Activated CD8-positive, alpha-beta T cell treated with anti-CD3 and anti-CD28 coated beads for 36 hours (primary cell): ENCODE measurements at regions of chr1 and their contacts with region 1.

Region 1: DNA sequence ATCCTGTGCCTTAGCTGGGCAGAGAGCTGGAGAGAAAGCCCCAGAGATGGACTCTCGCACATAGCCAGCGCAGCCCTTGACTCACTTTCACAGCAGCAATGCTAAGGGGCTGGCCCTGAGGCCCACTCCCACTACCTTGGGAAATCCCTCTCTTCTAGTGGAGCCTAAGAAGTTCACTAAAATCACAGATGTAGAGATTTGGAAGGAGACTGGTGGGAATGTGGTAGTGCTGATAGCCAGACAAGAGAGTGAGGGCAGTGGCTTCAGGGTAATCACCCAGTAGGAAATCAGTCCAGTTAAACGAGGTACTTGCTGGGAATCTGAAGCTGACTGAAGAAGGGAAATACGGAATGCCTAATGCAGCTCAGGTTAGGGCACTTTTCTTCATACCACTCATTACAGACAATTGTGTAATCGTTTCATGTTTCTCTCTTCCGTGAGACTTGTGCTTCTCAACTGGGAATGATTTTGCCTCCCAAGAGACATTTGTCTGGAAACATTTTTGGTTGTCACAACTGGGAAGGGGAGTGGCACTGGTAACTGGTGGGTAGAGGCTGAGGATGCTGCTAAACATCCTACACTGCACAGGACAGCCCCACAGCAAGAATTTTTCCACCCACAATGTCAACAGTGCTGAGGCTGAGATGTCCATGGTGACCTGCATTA is 42.4 kb upstream of the LRRC8C start:
- DNase-seq: peak; percentile 31
- ATAC-seq: peak; percentile 58
- H3K4me3 Mint-ChIP-seq: no peak overlapping the region
- H3K27ac Mint-ChIP-seq: peak overlapping the region; percentile 67
- H3K4me1 Mint-ChIP-seq: peaks cover 76% of the 10 kb centered on the region
- H3K27me3 Mint-ChIP-seq: no peaks in the 10 kb centered on the region
- CTCF ChIP-seq: no peak

Region 2: GRCh38 chr1:89499320-89499719 is 91.2 kb before region 1 on chr1:
- CTCF ChIA-PET with region 1: no interaction called
- POLR2A ChIA-PET with region 1: no interaction called
- intact Hi-C with region 1: no loop called
- DNase-seq: no peak
- ATAC-seq: no peak
- H3K4me3 Mint-ChIP-seq: no peak overlapping the region
- H3K27ac Mint-ChIP-seq: no peak overlapping the region
- H3K4me1 Mint-ChIP-seq: no peaks in the 10 kb centered on the region
- H3K27me3 Mint-ChIP-seq: peaks cover 2% of the 10 kb centered on the region
- CTCF ChIP-seq: no peak

Region 3: DNA sequence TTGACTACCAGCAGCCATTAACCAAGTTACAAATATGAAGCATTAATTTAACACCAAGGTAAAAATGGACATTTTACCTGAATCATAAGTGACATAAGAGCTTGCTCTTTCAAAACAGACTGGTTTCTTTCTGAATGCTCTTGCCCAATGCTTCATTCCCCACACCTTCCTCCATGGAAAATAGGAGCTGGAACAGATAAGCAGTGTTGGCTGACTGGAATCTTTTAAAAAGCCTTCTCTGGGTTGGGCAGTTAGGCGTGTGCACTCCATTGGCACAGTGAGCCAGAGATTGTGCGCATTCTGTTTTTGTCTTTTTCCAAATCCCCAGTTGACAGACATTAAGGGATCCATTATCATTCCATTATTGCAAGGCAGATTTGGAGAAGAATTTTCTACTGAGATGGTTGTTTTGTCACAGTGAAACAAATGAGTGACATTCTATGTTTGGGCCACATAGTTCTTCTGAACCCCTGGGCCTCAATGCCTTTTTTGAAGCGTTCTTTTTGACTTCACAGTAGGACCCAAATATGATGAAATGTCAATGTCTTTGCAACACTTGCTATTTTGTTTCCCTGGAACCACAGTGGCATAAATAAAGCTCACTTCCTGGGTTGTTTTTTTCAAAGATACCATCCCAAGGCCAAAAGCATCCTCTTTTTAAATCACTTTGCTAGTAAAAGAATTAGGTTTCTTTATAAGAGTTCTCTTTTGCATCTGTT is 33.7 kb before region 1 on chr1:
- CTCF ChIA-PET with region 1: no interaction called
- POLR2A ChIA-PET with region 1: no interaction called
- intact Hi-C with region 1: loop called (anchors 5 kb)
- DNase-seq: no peak
- ATAC-seq: no peak
- H3K4me3 Mint-ChIP-seq: no peak overlapping the region
- H3K27ac Mint-ChIP-seq: peak overlapping the region; percentile 64
- H3K4me1 Mint-ChIP-seq: peaks cover 55% of the 10 kb centered on the region
- H3K27me3 Mint-ChIP-seq: no peaks in the 10 kb centered on the region
- CTCF ChIP-seq: no peak

Region 4: DNA sequence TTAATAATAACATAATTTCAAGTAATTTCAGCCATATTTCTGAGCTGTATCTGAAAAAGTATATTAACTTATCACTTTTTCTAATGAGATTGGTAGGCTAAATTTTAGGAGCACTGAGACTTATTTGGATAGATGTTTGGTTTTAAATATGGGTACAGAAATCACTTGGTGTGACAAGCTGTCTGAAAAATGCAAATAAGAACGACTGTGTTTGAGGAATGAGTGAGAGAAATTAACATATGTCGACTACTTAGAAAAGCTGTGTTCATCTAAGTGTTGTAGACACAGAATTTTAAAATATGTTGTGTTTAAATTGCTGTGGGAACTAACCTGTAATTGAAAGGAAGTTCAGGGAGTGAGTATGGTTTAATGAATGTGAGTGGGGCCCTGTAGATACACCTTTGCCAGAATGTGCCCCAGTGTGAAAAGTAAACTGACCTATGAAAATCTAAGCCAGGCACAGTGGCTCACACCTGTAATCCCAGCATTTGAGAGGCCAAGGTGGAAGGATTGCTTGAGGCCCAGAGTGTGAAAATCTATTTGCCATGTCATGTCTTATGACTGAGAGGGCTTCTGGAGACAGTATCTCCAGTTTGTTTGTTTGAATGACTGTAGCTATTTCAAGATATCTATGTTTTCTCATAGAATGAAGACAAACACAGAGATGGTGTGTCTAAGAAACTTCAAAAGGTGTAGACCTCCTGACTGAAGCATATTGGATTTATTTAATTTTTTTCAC is 11.4 kb before region 1 on chr1:
- CTCF ChIA-PET with region 1: interaction called, 11 read pairs
- POLR2A ChIA-PET with region 1: no interaction called
- intact Hi-C with region 1: no loop called
- DNase-seq: no peak
- ATAC-seq: no peak
- H3K4me3 Mint-ChIP-seq: no peak overlapping the region
- H3K27ac Mint-ChIP-seq: no peak overlapping the region
- H3K4me1 Mint-ChIP-seq: peaks cover 36% of the 10 kb centered on the region
- H3K27me3 Mint-ChIP-seq: no peaks in the 10 kb centered on the region
- CTCF ChIP-seq: no peak

Region 5: GRCh38 chr1:89622895-89623294 is 32.3 kb after region 1 on chr1:
- CTCF ChIA-PET with region 1: no interaction called
- POLR2A ChIA-PET with region 1: no interaction called
- intact Hi-C with region 1: no loop called
- DNase-seq: no peak
- ATAC-seq: peak; percentile 11
- H3K4me3 Mint-ChIP-seq: no peak overlapping the region
- H3K27ac Mint-ChIP-seq: peak overlapping the region; percentile 59
- H3K4me1 Mint-ChIP-seq: peaks cover 57% of the 10 kb centered on the region
- H3K27me3 Mint-ChIP-seq: no peaks in the 10 kb centered on the region
- CTCF ChIP-seq: no peak

Region 6: DNA sequence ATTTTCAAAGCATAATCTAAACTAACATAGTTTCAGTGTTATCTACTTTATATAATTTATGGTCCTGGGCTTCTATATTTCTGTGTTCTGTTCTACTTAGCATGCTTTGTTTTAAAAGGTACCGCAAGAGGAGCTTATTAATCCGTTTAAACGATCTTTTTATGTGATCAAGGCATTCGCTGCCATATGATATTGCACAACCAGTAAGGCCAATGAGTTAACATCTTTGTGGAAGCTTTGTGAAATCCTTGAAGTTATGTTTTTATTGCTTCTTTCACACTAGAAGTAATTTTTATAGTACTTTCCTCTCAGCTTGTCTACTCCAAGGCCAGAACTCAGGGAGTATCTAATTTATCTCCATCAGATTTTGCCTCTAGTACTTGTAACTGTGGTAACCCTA is 51.2 kb after region 1 on chr1:
- CTCF ChIA-PET with region 1: no interaction called
- POLR2A ChIA-PET with region 1: no interaction called
- intact Hi-C with region 1: no loop called
- DNase-seq: no peak
- ATAC-seq: no peak
- H3K4me3 Mint-ChIP-seq: no peak overlapping the region
- H3K27ac Mint-ChIP-seq: peak overlapping the region; percentile 81
- H3K4me1 Mint-ChIP-seq: peaks cover 68% of the 10 kb centered on the region
- H3K27me3 Mint-ChIP-seq: no peaks in the 10 kb centered on the region
- CTCF ChIP-seq: no peak